SK-N-SH (cell line): ENCODE measurements at regions of chr11 and their contacts with region 1.

Region 1: GRCh38 chr11:111565114-111565720 is 24.7 kb downstream of the LAYN start:
- DNase-seq: peak; percentile 48
- H3K4me3 ChIP-seq: no peak overlapping the region; a peak in 1 of 4 replicates
- H3K27ac ChIP-seq: peak overlapping the region in 1 of 2 experiments; percentile 56; a peak in 2 of 4 replicates
- H3K4me1 ChIP-seq: peaks cover 11 to 22% of the 10 kb centered on the region in 2 experiments; a peak in 3 of 4 replicates
- H3K27me3 ChIP-seq: no peaks in the 10 kb centered on the region
- CTCF ChIP-seq: peak; percentile 89
- EP300 ChIP-seq: no peak
- RAD21 ChIP-seq: peak; percentile 89

Region 2: DNA sequence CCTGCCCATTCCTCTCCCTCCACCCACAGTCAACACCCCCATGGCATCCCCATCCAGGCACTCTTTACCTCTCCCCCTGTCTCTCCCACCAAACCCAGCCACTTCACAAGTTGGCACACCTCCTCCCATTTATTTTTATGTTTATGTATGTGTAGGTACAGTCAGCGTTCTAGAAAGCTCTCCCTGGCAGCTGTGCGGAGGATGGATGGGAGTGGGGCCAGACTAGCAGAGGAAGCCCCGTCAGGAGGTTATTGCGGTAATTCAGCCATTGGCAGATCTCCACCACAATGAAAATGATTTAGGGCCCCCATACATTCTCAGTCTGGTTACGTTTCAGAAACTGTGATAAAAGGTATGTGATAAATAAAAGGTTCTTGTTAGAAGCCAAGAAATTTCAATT is 104.4 kb before region 1 on chr11:
- CTCF ChIA-PET with region 1: no interaction called
- POLR2A ChIA-PET with region 1: no interaction called
- DNase-seq: peak; percentile 1
- H3K4me3 ChIP-seq: no peak overlapping the region
- H3K27ac ChIP-seq: no peak overlapping the region
- H3K4me1 ChIP-seq: peaks cover 0 to 4% of the 10 kb centered on the region in 2 experiments; a peak in 1 of 4 replicates
- H3K27me3 ChIP-seq: no peaks in the 10 kb centered on the region
- CTCF ChIP-seq: no peak
- EP300 ChIP-seq: no peak
- RAD21 ChIP-seq: no peak

Region 3: DNA sequence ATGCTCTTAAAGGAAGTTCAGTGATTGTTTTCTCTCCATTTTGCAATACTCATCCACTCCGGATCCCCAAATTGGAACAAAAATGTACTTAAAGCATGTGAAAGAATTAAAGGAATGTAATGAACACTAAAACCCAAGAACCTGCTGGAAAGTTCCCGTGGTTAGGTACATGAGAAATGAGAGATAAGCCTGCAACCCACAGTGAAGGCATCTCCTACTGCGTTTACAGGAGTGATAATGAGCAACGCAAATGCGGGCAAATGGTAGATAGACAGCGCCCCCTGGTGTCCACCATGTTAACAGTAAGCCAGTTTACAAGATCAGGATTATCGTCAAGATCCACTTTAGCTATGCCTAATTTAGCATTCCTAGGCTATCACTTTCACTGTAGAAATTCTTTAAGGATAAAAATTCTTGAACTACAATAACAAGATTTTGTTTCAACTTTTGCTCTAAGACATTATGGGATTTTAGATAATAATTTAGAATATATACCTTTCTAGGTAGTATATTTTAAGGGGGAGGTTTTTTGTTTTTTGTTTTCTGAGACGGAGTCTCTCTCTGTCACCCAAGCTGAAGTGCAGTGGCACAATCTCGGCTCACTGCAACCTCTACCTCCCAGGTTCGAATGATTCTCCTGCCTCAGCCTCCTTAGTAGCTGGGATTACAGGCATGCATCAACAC is 276.3 kb after region 1 on chr11:
- CTCF ChIA-PET with region 1: interaction called, 16 read pairs
- POLR2A ChIA-PET with region 1: no interaction called
- DNase-seq: peak; percentile 73
- H3K4me3 ChIP-seq: no peak overlapping the region
- H3K27ac ChIP-seq: peak overlapping the region; percentile 28 to 43; a peak in 2 of 4 replicates
- H3K4me1 ChIP-seq: peaks cover 3 to 7% of the 10 kb centered on the region in 2 experiments
- H3K27me3 ChIP-seq: no peaks in the 10 kb centered on the region
- CTCF ChIP-seq: peak; percentile 95
- EP300 ChIP-seq: no peak
- RAD21 ChIP-seq: peak; percentile 96